ENCODE measurements at regions of chr15 and their contacts with region 1.

Region 1: DNA sequence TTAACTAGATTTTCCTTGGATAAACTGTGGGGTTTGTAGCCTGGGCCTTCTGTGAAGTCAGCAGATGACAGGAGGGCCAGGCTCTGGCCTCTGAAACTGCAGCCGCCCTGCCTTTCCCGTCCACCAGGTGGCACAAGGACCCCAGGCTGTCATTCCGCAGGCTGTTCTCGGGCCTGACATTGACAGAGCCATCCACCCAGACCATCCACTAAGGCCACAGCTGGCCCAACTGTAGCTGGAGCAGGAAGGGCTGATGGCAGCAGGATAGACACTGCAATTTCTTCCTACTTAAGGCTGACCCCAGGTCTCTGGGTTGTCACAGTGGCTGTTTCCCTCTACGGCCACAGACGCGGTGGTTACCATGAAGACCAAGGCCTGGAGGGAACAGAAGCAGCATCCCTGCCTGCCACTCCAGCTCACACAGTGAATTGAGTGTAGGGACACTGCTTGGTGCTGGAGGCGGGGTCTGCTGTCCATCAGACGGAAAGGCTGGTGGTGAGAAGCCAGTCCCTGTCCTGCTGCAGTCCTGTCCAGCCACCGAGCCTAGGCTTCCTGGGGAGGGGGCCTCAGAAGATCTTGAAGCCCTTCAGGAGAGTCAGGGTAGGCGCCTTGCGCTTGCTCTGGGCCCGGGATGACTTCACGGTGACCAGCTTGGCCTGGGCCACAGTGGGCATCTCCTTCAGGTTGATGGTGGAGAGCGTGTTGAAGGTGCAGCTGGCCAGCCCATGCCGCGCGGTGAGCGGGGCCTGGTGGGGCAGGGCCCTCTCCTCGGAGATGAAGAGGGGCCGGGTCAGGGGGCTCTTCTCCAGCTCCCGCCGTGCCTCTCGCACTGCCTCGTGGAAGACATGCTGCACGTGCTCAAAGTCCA is 9.4 kb downstream of the SLC51B start:
- DNase-seq: peak; percentile 88
- H3K4me3 Mint-ChIP-seq: no peak overlapping the region
- H3K27ac Mint-ChIP-seq: no peak overlapping the region
- H3K4me1 Mint-ChIP-seq: peaks cover 49% of the 10 kb centered on the region
- H3K27me3 Mint-ChIP-seq: peaks cover 13% of the 10 kb centered on the region
- CTCF ChIP-seq: peak; percentile 91

Region 2: GRCh38 chr15:65077981-65078352 is 23.4 kb after region 1 on chr15:
- CTCF ChIA-PET with region 1: interaction called, 12 read pairs
- intact Hi-C with region 1: loop called (anchors 2 kb)
- DNase-seq: peak; percentile 84
- H3K4me3 Mint-ChIP-seq: no peak overlapping the region
- H3K27ac Mint-ChIP-seq: no peak overlapping the region
- H3K4me1 Mint-ChIP-seq: peaks cover 11% of the 10 kb centered on the region
- H3K27me3 Mint-ChIP-seq: peaks cover 29% of the 10 kb centered on the region
- CTCF ChIP-seq: peak; percentile 73

Region 3: DNA sequence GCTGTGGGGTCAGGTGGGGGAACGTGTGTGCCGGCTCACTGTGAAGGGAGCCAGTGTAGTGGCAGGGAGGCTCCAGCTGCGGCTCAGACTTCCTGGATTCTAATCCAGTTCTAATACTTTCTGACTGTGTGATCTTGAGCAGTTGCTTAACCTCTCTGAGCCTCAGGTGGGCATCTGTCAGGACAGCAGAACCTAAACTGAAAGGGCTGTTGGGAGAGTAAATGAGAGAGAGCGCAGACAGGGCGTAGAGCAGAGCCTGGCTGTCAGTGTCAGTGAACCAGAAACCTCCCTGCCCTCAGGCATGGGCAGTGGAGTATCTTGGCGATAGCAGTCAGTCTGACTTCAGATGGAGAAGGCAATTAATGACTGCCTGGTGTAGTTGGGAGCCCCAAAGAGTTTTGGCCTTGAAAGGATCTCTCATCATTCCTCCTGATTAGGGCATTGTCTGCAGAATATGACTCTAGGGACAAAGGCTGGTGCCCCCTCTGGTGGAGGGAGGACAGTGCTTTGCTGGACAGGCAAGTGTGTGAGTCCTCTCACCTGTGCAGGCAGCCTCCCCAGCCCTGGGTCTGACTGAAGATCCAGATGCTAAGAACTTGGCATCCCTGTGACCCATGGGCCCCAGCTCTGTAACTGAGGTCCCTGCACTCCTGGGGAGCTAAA is 31.6 kb after region 1 on chr15:
- CTCF ChIA-PET with region 1: interaction called, 12 read pairs
- intact Hi-C with region 1: loop called (anchors 2 kb)
- DNase-seq: peak; percentile 74
- H3K4me3 Mint-ChIP-seq: no peak overlapping the region
- H3K27ac Mint-ChIP-seq: no peak overlapping the region
- H3K4me1 Mint-ChIP-seq: peaks cover 21% of the 10 kb centered on the region
- H3K27me3 Mint-ChIP-seq: peaks cover 43% of the 10 kb centered on the region
- CTCF ChIP-seq: peak; percentile 33

Region 4: DNA sequence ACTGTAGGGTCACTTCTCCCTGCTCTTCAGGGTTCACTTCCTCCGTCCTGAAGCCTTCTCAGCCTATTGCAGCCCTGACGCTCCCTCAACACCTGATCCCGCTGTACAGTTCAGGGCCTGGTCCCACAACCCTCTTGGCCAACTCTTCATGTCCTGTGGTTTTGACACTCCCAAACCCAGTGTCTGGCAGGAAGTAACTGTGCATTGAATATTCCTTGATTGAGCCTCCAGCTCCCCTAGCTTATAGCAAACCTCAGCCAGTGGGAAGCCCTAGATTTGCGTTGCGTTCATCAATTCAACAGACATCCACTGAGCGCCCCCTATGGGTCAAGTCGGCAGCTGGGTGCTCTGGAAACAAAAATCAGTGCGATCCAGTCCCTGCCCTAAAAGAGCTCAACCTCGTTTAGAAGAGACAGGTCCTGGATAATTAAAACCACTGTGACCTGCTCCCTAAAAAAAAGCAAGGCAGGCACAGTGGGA is 46.9 kb after region 1 on chr15:
- CTCF ChIA-PET with region 1: interaction called, 14 read pairs
- intact Hi-C with region 1: loop called (anchors 1 kb)
- DNase-seq: peak; percentile 80
- H3K4me3 Mint-ChIP-seq: no peak overlapping the region
- H3K27ac Mint-ChIP-seq: no peak overlapping the region
- H3K4me1 Mint-ChIP-seq: no peaks in the 10 kb centered on the region
- H3K27me3 Mint-ChIP-seq: no peaks in the 10 kb centered on the region
- CTCF ChIP-seq: peak; percentile 88